HCT116 (cell line): ENCODE measurements at regions of chr9 and their contacts with region 1.

Region 1: GRCh38 chr9:110638381-110638954 is 30.1 kb upstream of the MUSK start:
- DNase-seq: no peak
- ATAC-seq: no peak
- H3K4me3 ChIP-seq: no peak overlapping the region
- H3K27ac ChIP-seq: no peak overlapping the region
- H3K4me1 ChIP-seq: no peaks in the 10 kb centered on the region
- H3K27me3 ChIP-seq: no peaks in the 10 kb centered on the region
- CTCF ChIP-seq: peak in 2 of 3 experiments; percentile 34 to 73; a peak in 4 of 6 replicates
- POLR2A ChIP-seq: no peak
- RAD21 ChIP-seq: peak; percentile 85

Region 2: DNA sequence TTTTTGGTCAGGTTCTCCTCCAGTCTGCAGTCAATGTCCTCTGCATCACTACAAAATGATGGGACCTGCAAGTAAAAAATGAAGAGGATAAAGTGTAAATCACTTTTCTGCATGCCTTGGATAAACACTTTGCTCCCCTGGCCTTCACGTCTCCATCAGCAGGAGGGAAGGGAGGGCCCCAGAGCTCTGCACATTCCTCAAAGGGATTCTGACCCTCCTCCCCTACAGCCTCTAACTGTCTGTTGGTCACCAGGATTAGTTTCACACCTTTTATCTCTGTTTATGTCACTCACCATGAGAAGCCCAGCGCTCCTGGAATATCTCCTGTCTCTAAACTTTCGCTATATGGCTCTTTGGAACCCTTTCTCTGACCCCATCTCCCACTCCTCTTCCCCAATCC is 162.2 kb before region 1 on chr9:
- CTCF ChIA-PET with region 1: no interaction called
- POLR2A ChIA-PET with region 1: no interaction called
- RAD21 ChIA-PET with region 1: no interaction called
- intact Hi-C with region 1: no loop called
- DNase-seq: no peak
- ATAC-seq: no peak
- H3K4me3 ChIP-seq: no peak overlapping the region
- H3K27ac ChIP-seq: no peak overlapping the region
- H3K4me1 ChIP-seq: no peaks in the 10 kb centered on the region
- H3K27me3 ChIP-seq: no peaks in the 10 kb centered on the region
- CTCF ChIP-seq: no peak
- POLR2A ChIP-seq: no peak
- RAD21 ChIP-seq: no peak

Region 3: GRCh38 chr9:110996436-110997220 is 358.2 kb after region 1 on chr9:
- CTCF ChIA-PET with region 1: no interaction called
- POLR2A ChIA-PET with region 1: no interaction called
- RAD21 ChIA-PET with region 1: no interaction called
- intact Hi-C with region 1: no loop called
- DNase-seq: no peak
- ATAC-seq: no peak
- H3K4me3 ChIP-seq: no peak overlapping the region
- H3K27ac ChIP-seq: no peak overlapping the region
- H3K4me1 ChIP-seq: no peaks in the 10 kb centered on the region
- H3K27me3 ChIP-seq: no peaks in the 10 kb centered on the region
- CTCF ChIP-seq: no peak
- POLR2A ChIP-seq: no peak
- RAD21 ChIP-seq: no peak

Region 4: GRCh38 chr9:111037381-111038305 is 399.2 kb after region 1 on chr9:
- CTCF ChIA-PET with region 1: no interaction called
- POLR2A ChIA-PET with region 1: no interaction called
- RAD21 ChIA-PET with region 1: no interaction called
- intact Hi-C with region 1: loop called (anchors 5 kb)
- DNase-seq: peak; percentile 7
- ATAC-seq: peak; percentile 65
- H3K4me3 ChIP-seq: peak overlapping the region; percentile 67 to 85
- H3K27ac ChIP-seq: peak overlapping the region; percentile 75; the same call in 1 of the 2 replicates
- H3K4me1 ChIP-seq: peaks cover 7 to 23% of the 10 kb centered on the region in 2 experiments; a peak in 3 of 4 replicates
- H3K27me3 ChIP-seq: no peaks in the 10 kb centered on the region
- CTCF ChIP-seq: 0 out of 6 replicates have a peak, but pooled peaks of 1 of the 3 experiments have one; percentile 11
- POLR2A ChIP-seq: no peak
- RAD21 ChIP-seq: no peak

Region 5: GRCh38 chr9:111149016-111149759 is 510.7 kb after region 1 on chr9:
- CTCF ChIA-PET with region 1: no interaction called
- POLR2A ChIA-PET with region 1: no interaction called
- RAD21 ChIA-PET with region 1: no interaction called
- intact Hi-C with region 1: loop called (anchors 5 kb)
- DNase-seq: peak; percentile 3
- ATAC-seq: peak; percentile 74
- H3K4me3 ChIP-seq: no peak overlapping the region
- H3K27ac ChIP-seq: no peak overlapping the region
- H3K4me1 ChIP-seq: no peaks in the 10 kb centered on the region
- H3K27me3 ChIP-seq: no peaks in the 10 kb centered on the region
- CTCF ChIP-seq: peak; percentile 13 to 40 (median 33); a peak in 3 of 6 replicates
- POLR2A ChIP-seq: no peak
- RAD21 ChIP-seq: peak; percentile 25; the same call in 1 of the 2 replicates

Region 6: DNA sequence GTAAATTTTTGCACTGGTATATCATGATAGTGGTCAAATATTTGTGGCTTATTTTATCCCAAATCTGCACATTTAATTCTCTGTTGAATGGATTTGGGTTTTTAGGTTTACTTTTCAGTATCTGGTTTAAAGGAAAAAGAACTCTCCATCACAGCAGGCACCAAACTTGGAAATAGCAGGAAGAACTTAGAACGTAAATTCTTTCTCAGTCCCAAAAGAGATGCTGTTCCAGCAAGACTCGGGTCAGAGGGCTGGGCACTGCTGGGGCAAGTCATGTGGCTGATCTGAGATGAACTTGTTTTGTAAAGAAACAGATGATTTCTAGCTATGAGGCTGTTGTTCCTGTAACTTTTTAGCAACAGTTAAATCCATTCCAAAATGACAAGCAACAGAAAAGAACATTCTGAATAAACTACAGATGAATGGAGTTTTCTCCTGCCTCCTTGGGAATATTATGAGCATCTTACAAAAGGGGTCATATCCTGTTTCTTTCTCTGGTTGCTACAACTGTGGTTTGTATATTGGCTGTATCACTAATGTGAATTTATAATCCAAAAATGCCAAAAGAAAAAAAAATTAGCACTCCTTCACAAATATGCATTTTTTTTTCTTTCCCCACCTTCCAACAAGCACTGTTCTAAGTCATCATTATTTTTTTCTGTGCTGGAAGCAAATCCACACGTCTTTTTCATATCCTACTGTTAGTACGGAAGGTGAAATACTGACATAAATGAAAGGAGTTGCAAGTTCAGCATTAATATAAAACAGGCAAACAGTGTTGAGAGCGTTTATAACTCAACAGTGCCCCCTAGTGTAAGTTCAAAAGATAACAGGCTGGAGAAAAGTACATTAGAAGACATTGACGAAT is 660.5 kb after region 1 on chr9:
- CTCF ChIA-PET with region 1: interaction called, 27 read pairs
- POLR2A ChIA-PET with region 1: no interaction called
- RAD21 ChIA-PET with region 1: no interaction called
- intact Hi-C with region 1: loop called (anchors 1 kb)
- DNase-seq: peak; percentile 46
- ATAC-seq: peak; percentile 83
- H3K4me3 ChIP-seq: no peak overlapping the region
- H3K27ac ChIP-seq: no peak overlapping the region
- H3K4me1 ChIP-seq: 0 out of 4 replicates have a peak, but pooled peaks cover 0 to 3% of the 10 kb centered on the region in 2 experiments
- H3K27me3 ChIP-seq: no peaks in the 10 kb centered on the region
- CTCF ChIP-seq: peak; percentile 59 to 88 (median 82)
- POLR2A ChIP-seq: no peak
- RAD21 ChIP-seq: peak; percentile 97

Region 7: DNA sequence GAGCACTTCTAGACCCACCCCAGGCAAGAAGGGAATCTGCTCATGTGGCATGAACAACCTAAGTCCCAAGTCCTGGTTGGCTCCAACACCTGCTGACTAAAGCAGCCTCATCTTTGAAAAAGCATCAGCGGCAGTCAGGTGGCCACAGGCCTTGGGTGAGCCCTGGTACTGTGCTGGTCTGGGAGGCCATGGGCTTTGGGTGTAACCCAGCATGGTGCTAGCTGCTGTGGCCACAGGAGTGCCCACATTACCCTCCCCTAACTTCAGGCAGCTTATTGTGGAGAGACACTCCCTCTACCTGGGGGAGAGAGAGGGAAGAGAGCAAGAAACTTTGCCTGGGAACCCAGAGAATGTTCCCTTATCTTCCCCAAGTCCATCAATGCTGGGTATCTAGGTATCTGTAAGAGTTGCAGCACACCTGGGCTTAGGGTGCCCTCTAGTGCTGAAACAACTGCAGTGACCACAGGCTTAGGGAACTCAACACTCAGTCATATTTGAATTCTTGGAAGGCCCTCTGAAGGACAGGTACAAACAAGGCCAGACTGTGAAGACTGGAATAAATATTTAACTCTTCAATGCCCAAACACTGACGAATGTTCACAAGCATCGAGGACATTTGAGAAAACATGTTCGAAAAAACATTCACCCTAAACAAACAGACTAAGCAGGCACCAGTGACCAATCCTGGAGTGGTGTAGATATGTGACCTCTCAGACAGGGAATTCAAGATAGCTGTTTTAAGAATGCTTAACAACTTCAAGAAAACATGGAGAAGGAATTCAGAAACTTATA is 761.5 kb after region 1 on chr9:
- CTCF ChIA-PET with region 1: no interaction called
- POLR2A ChIA-PET with region 1: no interaction called
- RAD21 ChIA-PET with region 1: no interaction called
- intact Hi-C with region 1: loop called (anchors 10 kb)
- DNase-seq: peak; percentile 33
- ATAC-seq: peak; percentile 99
- H3K4me3 ChIP-seq: no peak overlapping the region
- H3K27ac ChIP-seq: no peak overlapping the region
- H3K4me1 ChIP-seq: no peaks in the 10 kb centered on the region
- H3K27me3 ChIP-seq: no peaks in the 10 kb centered on the region
- CTCF ChIP-seq: peak; percentile 38 to 87 (median 73); a peak in 5 of 6 replicates
- POLR2A ChIP-seq: no peak
- RAD21 ChIP-seq: peak; percentile 75

Region 8: DNA sequence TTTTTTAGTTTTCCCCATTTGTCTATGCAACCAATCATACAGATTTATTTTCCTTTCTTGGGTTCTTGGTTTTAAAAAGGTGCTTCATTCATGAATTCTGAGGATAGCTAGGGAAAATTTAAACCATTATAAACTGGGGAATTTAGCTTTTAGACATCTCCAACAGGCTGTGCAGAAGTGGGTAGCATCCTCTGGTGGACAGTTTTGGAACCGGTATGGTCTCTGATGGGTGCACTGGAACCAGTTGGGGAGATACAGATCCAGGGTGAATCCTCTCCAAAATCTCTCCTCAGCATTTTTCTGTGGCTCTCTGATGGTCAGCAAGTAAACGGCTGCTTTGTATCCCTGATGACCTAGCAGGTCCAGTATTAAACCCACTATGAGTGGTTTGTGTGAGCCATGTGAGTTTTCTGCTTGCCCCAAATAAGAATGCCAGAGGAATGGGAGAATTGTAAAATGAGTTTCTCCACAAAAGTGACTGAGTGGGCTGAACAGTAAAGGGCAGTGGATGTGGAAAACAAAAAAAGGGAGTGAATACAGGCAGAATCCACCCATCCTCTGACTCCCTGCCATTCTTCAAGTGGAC is 983.5 kb after region 1 on chr9:
- CTCF ChIA-PET with region 1: no interaction called
- POLR2A ChIA-PET with region 1: no interaction called
- RAD21 ChIA-PET with region 1: no interaction called
- intact Hi-C with region 1: loop called (anchors 5 kb)
- DNase-seq: peak; percentile 39
- ATAC-seq: peak; percentile 99
- H3K4me3 ChIP-seq: no peak overlapping the region
- H3K27ac ChIP-seq: no peak overlapping the region
- H3K4me1 ChIP-seq: peaks cover 7 to 10% of the 10 kb centered on the region in 2 experiments
- H3K27me3 ChIP-seq: no peaks in the 10 kb centered on the region
- CTCF ChIP-seq: peak; percentile 79 to 96 (median 95)
- POLR2A ChIP-seq: no peak
- RAD21 ChIP-seq: peak; percentile 84

Region 9: GRCh38 chr9:111691672-111692329 is 1053.3 kb after region 1 on chr9:
- CTCF ChIA-PET with region 1: no interaction called
- POLR2A ChIA-PET with region 1: no interaction called
- RAD21 ChIA-PET with region 1: no interaction called
- intact Hi-C with region 1: loop called (anchors 10 kb)
- DNase-seq: peak; percentile 24
- ATAC-seq: peak; percentile 74
- H3K4me3 ChIP-seq: no peak overlapping the region
- H3K27ac ChIP-seq: no peak overlapping the region
- H3K4me1 ChIP-seq: peaks cover 0 to 4% of the 10 kb centered on the region in 2 experiments; a peak in 1 of 4 replicates
- H3K27me3 ChIP-seq: no peaks in the 10 kb centered on the region
- CTCF ChIP-seq: peak; percentile 39 to 57 (median 54); a peak in 5 of 6 replicates
- POLR2A ChIP-seq: no peak
- RAD21 ChIP-seq: peak; percentile 68